Transverse colon (tissue), 4 donors: ENCODE measurements at regions of chr6 and their contacts with region 1.

Region 1: DNA sequence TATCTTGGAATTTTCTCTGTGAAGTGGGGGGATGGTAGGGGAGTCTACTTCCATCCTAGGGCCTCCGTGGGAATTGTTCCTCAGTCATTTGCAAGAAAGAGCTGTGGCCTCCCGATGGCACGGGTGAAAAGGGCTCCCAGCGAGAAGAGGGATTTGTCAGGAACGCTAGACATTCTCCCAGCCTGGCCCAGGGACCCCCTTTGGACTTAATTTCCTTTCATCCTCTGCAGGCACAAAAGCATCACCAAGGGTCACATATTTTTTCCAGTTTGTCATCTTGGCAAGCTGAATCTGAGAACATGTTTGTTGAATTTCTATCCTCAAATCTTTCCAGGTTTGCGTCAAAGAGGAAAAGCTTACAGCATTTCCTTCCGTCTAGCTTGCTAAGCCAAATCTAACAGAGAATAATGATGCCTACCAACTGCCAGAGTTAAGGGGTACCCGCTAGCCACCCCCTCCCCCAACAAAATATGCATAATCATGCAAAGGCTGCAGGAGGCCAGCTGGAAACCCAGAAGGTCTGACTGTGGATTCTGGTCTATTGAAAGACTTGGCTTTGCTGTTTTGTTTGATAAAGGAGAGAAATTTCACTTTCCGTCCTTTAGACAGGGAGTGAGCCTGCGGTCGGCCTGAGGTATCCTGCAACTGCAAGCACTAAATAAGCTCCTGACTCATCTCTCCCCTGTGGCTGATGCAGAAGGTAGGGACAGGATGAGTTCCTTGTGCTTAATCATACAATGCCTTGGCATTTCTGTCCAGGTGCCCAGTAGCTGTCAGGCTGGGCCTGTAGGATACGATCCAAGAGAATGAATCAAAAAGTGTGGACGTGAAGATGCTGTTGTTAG is 23.1 kb downstream of the PSMG4 start:
- DNase-seq: peak; percentile 7
- H3K4me3 ChIP-seq: no peak overlapping the region
- H3K27ac ChIP-seq: peak overlapping the region in 3 of 4 donors; percentile 4 to 58 (median 24)
- H3K4me1 ChIP-seq: peaks cover 4 to 7% (median 6%) of the 10 kb centered on the region in 4 donors
- H3K27me3 ChIP-seq: no peaks in the 10 kb centered on the region
- CTCF ChIP-seq: no peak
- EP300 ChIP-seq: no peak
- POLR2A ChIP-seq: no peak

Region 2: DNA sequence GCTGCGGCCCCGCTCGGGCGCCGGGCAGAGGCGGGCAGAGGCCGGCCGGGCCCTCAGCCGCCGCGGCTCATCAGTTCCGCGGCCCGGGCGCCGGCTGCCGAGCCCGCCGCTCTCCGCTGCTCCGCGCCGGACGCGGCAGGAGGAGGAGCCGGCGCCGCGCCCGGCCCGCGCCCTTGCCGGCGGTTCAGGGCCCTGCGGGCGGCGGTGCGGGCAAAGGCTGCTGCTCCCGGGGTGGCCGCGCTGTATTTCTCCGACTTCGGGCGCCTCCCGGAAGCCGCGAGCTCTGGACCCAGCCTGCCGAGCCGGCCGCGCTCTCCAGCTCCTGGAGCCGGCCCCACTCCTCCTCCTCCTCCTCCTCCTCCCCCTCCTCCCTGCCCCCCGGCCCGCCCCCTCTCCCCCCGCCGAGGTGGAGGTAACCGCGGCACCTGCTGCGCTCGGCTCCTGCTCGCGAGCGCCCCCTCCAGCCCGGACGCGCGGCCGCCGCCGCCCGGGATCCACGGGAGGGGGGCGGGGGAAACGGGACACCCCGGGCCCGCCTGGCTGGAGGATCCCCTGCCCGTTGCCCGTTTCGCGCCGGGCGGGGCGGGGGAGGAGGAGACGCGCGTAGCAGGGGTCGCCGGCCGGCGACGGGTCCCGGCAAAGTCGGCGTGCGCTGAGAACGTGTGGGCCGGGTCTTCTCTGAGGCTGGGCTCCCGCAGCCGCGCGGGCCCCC is 175.1 kb after region 1 on chr6 and contains the start of gene SLC22A23:
- in situ Hi-C with region 1: loop called (anchors 10 to 25 kb)
- intact Hi-C with region 1: loop called (anchors 1 kb)
- DNase-seq: peak; percentile 85
- H3K4me3 ChIP-seq: peak within 1 kb of the TSS; percentile 51 to 83 (median 73)
- H3K27ac ChIP-seq: peak within 1 kb of the TSS; percentile 81 to 88 (median 88)
- H3K4me1 ChIP-seq: peaks cover 0 to 28% (median 15%) of the 10 kb centered on the region in 4 donors
- H3K27me3 ChIP-seq: peaks cover 5% of the 10 kb centered on the region
- CTCF ChIP-seq: peak; percentile 20 to 90 (median 71)
- EP300 ChIP-seq: no peak
- POLR2A ChIP-seq: peak; percentile 11
- total RNA-seq, gene SLC22A23: 96.1 to 161 (median 117) TPM

Region 3: GRCh38 chr6:3650959-3651697 is 369.3 kb after region 1 on chr6:
- in situ Hi-C with region 1: no loop called
- intact Hi-C with region 1: no loop called
- DNase-seq: no peak
- H3K4me3 ChIP-seq: no peak overlapping the region
- H3K27ac ChIP-seq: no peak overlapping the region
- H3K4me1 ChIP-seq: no peaks in the 10 kb centered on the region
- H3K27me3 ChIP-seq: no peaks in the 10 kb centered on the region
- CTCF ChIP-seq: no peak
- EP300 ChIP-seq: no peak
- POLR2A ChIP-seq: no peak

Region 4: GRCh38 chr6:3732345-3733141 is 450.7 kb after region 1 on chr6:
- in situ Hi-C with region 1: loop called (anchors 5 to 10 kb)
- intact Hi-C with region 1: loop called (anchors 2 kb)
- DNase-seq: peak; percentile 77
- H3K4me3 ChIP-seq: no peak overlapping the region
- H3K27ac ChIP-seq: no peak overlapping the region
- H3K4me1 ChIP-seq: peaks cover 0 to 3% (median 0%) of the 10 kb centered on the region in 4 donors
- H3K27me3 ChIP-seq: no peaks in the 10 kb centered on the region
- CTCF ChIP-seq: peak; percentile 84 to 86 (median 85)
- EP300 ChIP-seq: no peak
- POLR2A ChIP-seq: no peak

Region 5: DNA sequence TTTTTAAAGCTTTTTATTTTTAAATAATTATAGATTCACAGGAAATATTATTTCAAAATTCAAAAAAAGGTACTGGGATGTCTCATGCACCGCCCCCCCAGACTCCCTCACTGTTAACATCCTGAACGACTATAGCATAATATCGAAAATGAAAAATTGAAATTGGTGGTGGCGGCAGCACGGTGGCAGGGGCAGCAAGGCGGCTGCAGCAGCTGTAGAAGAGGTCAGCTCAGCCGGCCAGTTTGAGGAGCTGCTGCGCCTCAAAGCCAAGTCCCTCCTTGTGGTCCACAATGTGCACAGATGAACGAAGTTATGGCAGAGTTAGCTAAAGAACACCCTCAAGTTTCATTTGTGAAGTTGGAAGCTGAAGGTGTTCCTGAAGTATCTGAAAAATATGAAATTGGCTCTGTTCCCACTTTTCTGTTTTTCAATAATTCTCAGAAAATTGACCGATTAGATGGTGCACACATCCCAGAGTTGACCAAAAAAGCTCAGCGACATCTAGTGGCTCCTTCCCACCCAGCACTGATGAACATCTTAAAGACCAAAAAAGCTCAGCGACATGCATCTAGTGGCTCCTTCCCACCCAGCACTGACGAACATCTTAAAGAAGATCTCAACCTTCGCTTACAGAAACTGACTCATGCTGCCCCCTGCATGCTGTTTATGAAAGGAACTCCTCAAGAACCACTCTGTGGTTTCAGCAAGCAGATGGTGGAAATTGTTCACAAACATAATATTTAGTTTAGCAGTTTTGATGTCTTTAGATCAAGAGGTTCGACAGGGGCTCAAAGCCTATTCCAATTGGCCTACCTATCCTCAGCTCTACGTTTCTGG is 696.2 kb after region 1 on chr6:
- in situ Hi-C with region 1: loop called in 2 of 4 experiments (anchors 25 kb)
- intact Hi-C with region 1: no loop called
- DNase-seq: peak; percentile 9
- H3K4me3 ChIP-seq: no peak overlapping the region
- H3K27ac ChIP-seq: no peak overlapping the region
- H3K4me1 ChIP-seq: peaks cover 0 to 9% (median 0%) of the 10 kb centered on the region in 4 donors
- H3K27me3 ChIP-seq: no peaks in the 10 kb centered on the region
- CTCF ChIP-seq: peak; percentile 40 to 52 (median 42)
- EP300 ChIP-seq: no peak
- POLR2A ChIP-seq: no peak